ENCODE measurements at regions of chr2 and their contacts with region 1.

Region 1: GRCh38 chr2:86783615-86784339 is 6.9 kb downstream of the CD8A start:
- DNase-seq: peak in 2 of 5 donors; percentile 35 to 73
- H3K4me3 ChIP-seq: no peak overlapping the region
- H3K4me3 Mint-ChIP-seq: peak overlapping the region; percentile 3 to 96 (median 46)
- H3K27ac ChIP-seq: peak overlapping the region; percentile 29
- H3K27ac Mint-ChIP-seq: peak overlapping the region; percentile 94 to 100 (median 100)
- H3K4me1 ChIP-seq: peaks cover 43% of the 10 kb centered on the region
- H3K4me1 Mint-ChIP-seq: peaks cover 66 to 79% (median 77%) of the 10 kb centered on the region in 3 donors
- H3K27me3 ChIP-seq: no peaks in the 10 kb centered on the region
- H3K27me3 Mint-ChIP-seq: peaks cover 0 to 14% of the 10 kb centered on the region in 2 donors

Region 2: DNA sequence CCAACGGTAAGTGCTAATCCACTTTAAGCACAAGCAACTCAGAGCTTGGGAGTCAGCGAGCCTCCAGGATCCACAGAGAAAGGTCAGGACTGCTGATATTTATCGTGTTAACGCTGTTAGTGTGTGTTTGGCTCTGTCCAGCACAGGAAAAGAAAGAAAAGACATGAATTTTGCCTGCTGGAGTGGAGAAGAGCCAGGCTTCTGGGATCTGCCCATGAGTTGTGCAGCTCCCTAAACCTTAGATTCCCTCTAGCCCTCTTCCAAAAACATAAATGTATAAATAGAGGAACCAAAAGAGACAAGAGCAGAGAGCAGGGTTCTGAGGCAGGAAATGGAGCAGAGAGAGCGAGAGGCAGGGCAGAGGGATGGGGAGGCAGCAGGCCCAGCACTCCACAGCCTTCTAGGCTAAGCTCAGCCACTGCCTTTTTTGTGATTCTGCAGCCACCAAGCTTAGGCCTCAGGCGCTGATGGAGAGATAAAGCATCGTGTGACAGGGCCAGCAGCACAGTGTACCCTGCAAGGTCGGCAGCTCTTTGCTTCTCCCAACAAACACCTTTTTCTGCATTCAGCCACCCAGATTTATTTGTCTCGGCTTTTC is 1259.3 kb before region 1 on chr2:
- CTCF ChIA-PET with region 1: no interaction called
- POLR2A ChIA-PET with region 1: no interaction called
- DNase-seq: no peak
- H3K4me3 ChIP-seq: no peak overlapping the region
- H3K4me3 Mint-ChIP-seq: no peak overlapping the region
- H3K27ac ChIP-seq: peak overlapping the region; percentile 24
- H3K27ac Mint-ChIP-seq: no peak overlapping the region
- H3K4me1 ChIP-seq: no peaks in the 10 kb centered on the region
- H3K4me1 Mint-ChIP-seq: no peaks in the 10 kb centered on the region
- H3K27me3 ChIP-seq: no peaks in the 10 kb centered on the region
- H3K27me3 Mint-ChIP-seq: peaks cover 3 to 27% of the 10 kb centered on the region in 2 donors

Region 3: GRCh38 chr2:86147793-86148192 is 636.0 kb before region 1 on chr2:
- CTCF ChIA-PET with region 1: no interaction called
- POLR2A ChIA-PET with region 1: no interaction called
- DNase-seq: no peak
- H3K4me3 ChIP-seq: no peak overlapping the region
- H3K4me3 Mint-ChIP-seq: no peak overlapping the region
- H3K27ac ChIP-seq: no peak overlapping the region
- H3K27ac Mint-ChIP-seq: peak overlapping the region in 5 of 8 donors; percentile 7 to 68 (median 29)
- H3K4me1 ChIP-seq: no peaks in the 10 kb centered on the region
- H3K4me1 Mint-ChIP-seq: peaks cover 0 to 3% (median 2%) of the 10 kb centered on the region in 3 donors
- H3K27me3 ChIP-seq: no peaks in the 10 kb centered on the region
- H3K27me3 Mint-ChIP-seq: no peaks in the 10 kb centered on the region

Region 4: DNA sequence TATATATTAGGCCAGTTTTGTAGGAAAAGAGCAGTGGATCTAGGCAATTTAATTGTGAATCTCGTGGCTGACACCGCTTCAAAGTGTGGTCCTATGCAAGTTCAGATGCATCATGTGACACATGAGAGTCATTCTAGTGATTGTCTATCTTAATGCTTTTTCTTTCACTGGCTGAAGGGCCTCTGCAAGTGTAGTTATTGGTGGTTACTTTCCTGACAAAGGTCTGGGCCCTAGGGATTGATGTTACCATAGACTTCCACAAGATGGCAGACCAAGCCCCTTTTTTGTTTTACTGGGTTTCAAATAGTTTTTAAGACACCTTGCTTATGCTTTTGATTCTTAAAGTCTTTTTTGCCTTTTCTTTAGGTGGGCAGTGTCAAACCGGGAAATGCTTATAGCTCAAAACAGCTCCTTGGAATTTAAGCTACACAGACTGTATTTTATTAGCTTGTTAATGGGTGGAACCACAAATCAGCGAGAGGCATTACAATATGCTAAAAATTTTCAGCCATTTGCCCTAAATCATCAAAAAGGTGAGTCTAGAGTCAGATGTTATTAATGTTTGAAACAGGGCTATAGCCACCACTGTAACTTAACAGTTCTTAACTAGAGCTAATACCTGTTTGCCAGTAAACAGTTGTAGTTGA is 19.0 kb before region 1 on chr2:
- CTCF ChIA-PET with region 1: interaction called, 15 read pairs
- POLR2A ChIA-PET with region 1: interaction called, 8 read pairs
- DNase-seq: peak in 4 of 5 donors; percentile 32 to 71 (median 56)
- H3K4me3 ChIP-seq: no peak overlapping the region
- H3K4me3 Mint-ChIP-seq: no peak overlapping the region
- H3K27ac ChIP-seq: no peak overlapping the region
- H3K27ac Mint-ChIP-seq: peak overlapping the region; percentile 39 to 94 (median 90)
- H3K4me1 ChIP-seq: peaks cover 5% of the 10 kb centered on the region
- H3K4me1 Mint-ChIP-seq: peaks cover 21 to 45% (median 41%) of the 10 kb centered on the region in 3 donors
- H3K27me3 ChIP-seq: no peaks in the 10 kb centered on the region
- H3K27me3 Mint-ChIP-seq: no peaks in the 10 kb centered on the region

Measured in CD8-positive, alpha-beta memory T cell (primary cell).